ENCODE measurements at regions of chr9 and their contacts with region 1.

Region 1: GRCh38 chr9:86337469-86338108 is 16.6 kb downstream of the TUT7 start:
- DNase-seq: no peak
- H3K4me3 ChIP-seq: no peak overlapping the region
- H3K27ac ChIP-seq: no peak overlapping the region
- H3K4me1 ChIP-seq: no peaks in the 10 kb centered on the region
- H3K27me3 ChIP-seq: no peaks in the 10 kb centered on the region
- CTCF ChIP-seq: no peak

Region 2: GRCh38 chr9:86163503-86163902 is 174.1 kb before region 1 on chr9:
- intact Hi-C with region 1: no loop called
- DNase-seq: no peak
- H3K4me3 ChIP-seq: no peak overlapping the region
- H3K27ac ChIP-seq: no peak overlapping the region
- H3K4me1 ChIP-seq: no peaks in the 10 kb centered on the region
- H3K27me3 ChIP-seq: no peaks in the 10 kb centered on the region
- CTCF ChIP-seq: no peak

Region 3: GRCh38 chr9:86257391-86257790 is 80.2 kb before region 1 on chr9:
- intact Hi-C with region 1: no loop called
- DNase-seq: no peak
- H3K4me3 ChIP-seq: no peak overlapping the region
- H3K27ac ChIP-seq: no peak overlapping the region
- H3K4me1 ChIP-seq: no peaks in the 10 kb centered on the region
- H3K27me3 ChIP-seq: no peaks in the 10 kb centered on the region
- CTCF ChIP-seq: no peak

Region 4: GRCh38 chr9:86303316-86303975 is 34.1 kb before region 1 on chr9:
- intact Hi-C with region 1: loop called (anchors 5 kb)
- DNase-seq: no peak
- H3K4me3 ChIP-seq: no peak overlapping the region
- H3K27ac ChIP-seq: no peak overlapping the region
- H3K4me1 ChIP-seq: no peaks in the 10 kb centered on the region
- H3K27me3 ChIP-seq: no peaks in the 10 kb centered on the region
- CTCF ChIP-seq: no peak